ENCODE measurements at regions of chr1 and their contacts with region 1.

Region 1: DNA sequence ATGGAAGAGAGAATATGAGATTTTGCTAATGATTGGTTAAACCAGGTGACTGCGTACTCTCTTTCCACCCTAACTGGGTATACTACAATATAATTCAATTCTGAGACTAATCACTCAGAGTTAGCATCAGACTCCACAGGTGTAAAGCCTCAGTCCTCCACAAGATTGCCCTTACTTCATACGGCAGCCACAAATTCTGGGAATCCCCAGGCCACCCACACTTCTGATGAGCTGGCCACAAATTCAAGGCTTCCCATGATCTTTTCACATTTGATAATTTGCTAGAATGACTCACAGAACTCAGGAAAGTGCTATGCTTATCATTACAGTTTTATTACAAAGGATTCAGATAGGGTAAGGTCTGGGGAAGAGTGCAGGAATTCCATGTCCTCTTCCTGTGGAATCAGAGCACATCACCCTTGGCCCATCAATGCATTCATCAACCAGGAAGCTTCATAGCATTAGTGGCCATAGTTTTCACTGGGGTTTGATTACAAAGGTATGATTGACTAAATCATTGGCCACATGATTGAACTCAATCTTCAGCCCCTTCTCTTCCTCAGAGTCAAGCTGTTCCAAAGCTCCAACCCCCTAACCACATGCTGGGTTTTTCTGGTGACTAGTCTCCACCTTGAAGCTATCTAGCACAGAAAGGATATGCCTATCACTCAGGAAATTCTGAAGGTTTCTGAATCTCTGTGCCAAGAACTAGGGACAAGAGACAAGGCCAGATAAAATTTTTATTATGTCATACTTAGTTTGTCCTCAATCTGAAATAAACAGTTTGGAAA is 131.7 kb downstream of the HHIPL2 start:
- DNase-seq: no peak
- H3K4me3 ChIP-seq: no peak overlapping the region
- H3K27ac ChIP-seq: no peak overlapping the region
- H3K4me1 ChIP-seq: no peaks in the 10 kb centered on the region
- H3K27me3 ChIP-seq: 0 out of 2 replicates have a peak, but pooled peaks cover 5% of the 10 kb centered on the region
- CTCF ChIP-seq: no peak

Region 2: DNA sequence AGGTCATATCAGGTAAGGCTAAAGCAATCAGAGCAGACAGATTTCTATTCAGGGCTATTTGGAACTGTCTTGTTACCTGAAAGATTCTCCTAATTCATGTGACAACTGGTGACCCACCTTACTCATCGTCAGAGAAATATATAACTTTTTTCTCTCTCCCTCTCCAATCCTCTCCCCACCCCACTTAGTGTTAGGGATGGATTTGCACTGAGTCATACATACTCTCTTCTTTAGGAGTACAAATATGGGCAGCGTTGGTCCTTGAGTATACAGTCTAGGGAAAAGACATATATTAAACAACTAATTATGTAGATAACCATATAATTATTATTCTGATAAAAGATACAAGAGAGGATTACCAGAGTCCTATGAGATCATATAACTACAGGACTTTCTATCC is 114.5 kb before region 1 on chr1:
- CTCF ChIA-PET with region 1: no interaction called
- POLR2A ChIA-PET with region 1: interaction called, 10 read pairs
- intact Hi-C with region 1: no loop called
- DNase-seq: no peak
- H3K4me3 ChIP-seq: no peak overlapping the region
- H3K27ac ChIP-seq: no peak overlapping the region
- H3K4me1 ChIP-seq: no peaks in the 10 kb centered on the region
- H3K27me3 ChIP-seq: no peaks in the 10 kb centered on the region
- CTCF ChIP-seq: no peak

Region 3: GRCh38 chr1:222334026-222334680 is 82.0 kb before region 1 on chr1:
- CTCF ChIA-PET with region 1: no interaction called
- POLR2A ChIA-PET with region 1: no interaction called
- intact Hi-C with region 1: no loop called
- DNase-seq: no peak
- H3K4me3 ChIP-seq: no peak overlapping the region
- H3K27ac ChIP-seq: no peak overlapping the region
- H3K4me1 ChIP-seq: no peaks in the 10 kb centered on the region
- H3K27me3 ChIP-seq: no peaks in the 10 kb centered on the region
- CTCF ChIP-seq: no peak

Region 4: GRCh38 chr1:222521299-222522104 is 105.3 kb after region 1 on chr1:
- CTCF ChIA-PET with region 1: no interaction called
- POLR2A ChIA-PET with region 1: no interaction called
- intact Hi-C with region 1: no loop called
- DNase-seq: peak; percentile 68 to 99
- H3K4me3 ChIP-seq: peak overlapping the region; percentile 23; the same call in 1 of the 2 replicates
- H3K27ac ChIP-seq: peak overlapping the region; percentile 96
- H3K4me1 ChIP-seq: peaks cover 47% of the 10 kb centered on the region
- H3K27me3 ChIP-seq: no peaks in the 10 kb centered on the region
- CTCF ChIP-seq: no peak

Region 5: GRCh38 chr1:222928212-222928611 is 512.0 kb after region 1 on chr1:
- CTCF ChIA-PET with region 1: no interaction called
- POLR2A ChIA-PET with region 1: no interaction called
- intact Hi-C with region 1: no loop called
- DNase-seq: no peak
- H3K4me3 ChIP-seq: no peak overlapping the region
- H3K27ac ChIP-seq: no peak overlapping the region
- H3K4me1 ChIP-seq: no peaks in the 10 kb centered on the region
- H3K27me3 ChIP-seq: no peaks in the 10 kb centered on the region
- CTCF ChIP-seq: no peak